ENCODE measurements at regions of chr1 and their contacts with region 1.

Region 1: DNA sequence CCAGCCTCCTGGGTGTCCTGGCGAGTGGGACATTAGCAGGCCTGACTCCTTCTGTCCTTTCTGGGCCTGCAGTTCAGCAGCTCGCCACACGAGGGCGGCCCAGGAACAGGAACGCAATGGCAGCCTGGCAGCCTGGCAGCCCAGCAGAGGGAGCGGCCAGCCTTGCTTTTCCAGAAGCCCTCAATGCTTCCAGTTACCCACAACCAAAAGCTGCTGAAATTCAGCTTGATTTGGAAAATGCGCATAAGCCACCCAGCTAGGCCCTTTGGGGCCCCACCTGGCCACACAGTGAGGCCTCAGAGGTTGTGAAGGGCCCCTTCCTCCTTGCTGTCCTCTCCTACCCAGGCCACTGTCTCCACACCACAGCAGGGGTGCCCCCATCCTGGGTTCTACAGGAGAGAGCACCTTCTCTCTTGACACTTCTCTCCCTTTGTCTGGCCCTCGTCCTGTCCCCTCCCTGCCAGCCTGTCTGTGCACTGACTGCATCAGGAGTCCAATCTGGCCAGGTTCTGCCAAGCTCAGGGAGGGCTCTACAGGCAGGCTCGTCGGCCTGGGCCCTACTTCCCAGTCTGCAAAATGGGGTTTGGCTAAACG is 103.4 kb upstream of the VAMP3 start:
- DNase-seq: peak; percentile 66 to 84 (median 78)
- H3K4me3 ChIP-seq: no peak overlapping the region
- H3K4me3 Mint-ChIP-seq: peak overlapping the region in 1 of 7 donors; percentile 74
- H3K27ac ChIP-seq: no peak overlapping the region
- H3K27ac Mint-ChIP-seq: peak overlapping the region in 1 of 8 donors; percentile 61
- H3K4me1 ChIP-seq: no peaks in the 10 kb centered on the region
- H3K4me1 Mint-ChIP-seq: peaks cover 0 to 16% (median 8%) of the 10 kb centered on the region in 3 donors
- H3K27me3 ChIP-seq: no peaks in the 10 kb centered on the region
- H3K27me3 Mint-ChIP-seq: peaks cover 0 to 5% of the 10 kb centered on the region in 2 donors

Region 2: DNA sequence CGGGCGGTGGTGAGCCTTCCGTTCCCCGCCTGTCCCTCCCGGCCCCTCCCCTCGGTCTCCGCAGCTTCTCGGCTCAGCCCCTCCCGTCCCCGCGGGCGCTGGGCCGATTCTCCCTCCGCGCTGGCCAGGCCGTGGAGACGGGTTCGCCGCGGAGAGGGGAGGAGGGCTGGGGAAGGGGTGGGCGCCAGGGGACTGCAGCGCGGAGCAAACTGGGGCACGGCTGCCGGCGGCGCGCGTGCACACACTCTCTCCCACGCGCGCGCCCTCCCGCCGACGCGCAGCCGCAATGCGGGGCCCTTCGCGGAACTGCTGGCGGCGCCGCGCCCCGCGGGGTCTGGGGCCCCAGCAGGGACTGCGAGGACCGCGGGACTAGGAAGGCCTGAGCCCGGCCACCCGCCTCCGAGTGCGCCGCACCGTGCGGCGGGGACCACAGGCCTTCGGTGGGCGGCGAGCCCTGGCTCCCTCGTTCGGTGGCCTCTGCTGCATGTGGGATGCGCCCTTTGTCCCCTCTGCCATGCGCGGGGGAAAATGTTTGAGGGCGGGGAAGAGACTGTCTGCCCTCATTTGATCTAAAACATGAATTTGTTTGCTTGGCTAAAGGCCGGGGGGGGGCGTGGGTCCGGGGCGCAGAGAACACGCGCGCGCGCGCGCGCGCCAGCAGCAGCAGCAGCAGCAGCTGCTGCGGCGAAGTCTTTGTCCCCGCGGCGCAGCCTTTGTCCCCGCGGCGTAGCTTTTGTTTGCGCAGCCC is 12.7 kb after region 1 on chr1:
- CTCF ChIA-PET with region 1: interaction called, 52 read pairs
- POLR2A ChIA-PET with region 1: no interaction called
- DNase-seq: peak in 3 of 5 donors; percentile 37 to 51 (median 37)
- H3K4me3 ChIP-seq: peak overlapping the region; percentile 61
- H3K4me3 Mint-ChIP-seq: peak overlapping the region; percentile 76 to 92 (median 79)
- H3K27ac ChIP-seq: no peak overlapping the region
- H3K27ac Mint-ChIP-seq: peak overlapping the region in 3 of 8 donors; percentile 37 to 87 (median 66)
- H3K4me1 ChIP-seq: no peaks in the 10 kb centered on the region
- H3K4me1 Mint-ChIP-seq: no peaks in the 10 kb centered on the region
- H3K27me3 ChIP-seq: peaks cover 5% of the 10 kb centered on the region
- H3K27me3 Mint-ChIP-seq: peaks cover under 1 to 6% of the 10 kb centered on the region in 2 donors

Region 3: DNA sequence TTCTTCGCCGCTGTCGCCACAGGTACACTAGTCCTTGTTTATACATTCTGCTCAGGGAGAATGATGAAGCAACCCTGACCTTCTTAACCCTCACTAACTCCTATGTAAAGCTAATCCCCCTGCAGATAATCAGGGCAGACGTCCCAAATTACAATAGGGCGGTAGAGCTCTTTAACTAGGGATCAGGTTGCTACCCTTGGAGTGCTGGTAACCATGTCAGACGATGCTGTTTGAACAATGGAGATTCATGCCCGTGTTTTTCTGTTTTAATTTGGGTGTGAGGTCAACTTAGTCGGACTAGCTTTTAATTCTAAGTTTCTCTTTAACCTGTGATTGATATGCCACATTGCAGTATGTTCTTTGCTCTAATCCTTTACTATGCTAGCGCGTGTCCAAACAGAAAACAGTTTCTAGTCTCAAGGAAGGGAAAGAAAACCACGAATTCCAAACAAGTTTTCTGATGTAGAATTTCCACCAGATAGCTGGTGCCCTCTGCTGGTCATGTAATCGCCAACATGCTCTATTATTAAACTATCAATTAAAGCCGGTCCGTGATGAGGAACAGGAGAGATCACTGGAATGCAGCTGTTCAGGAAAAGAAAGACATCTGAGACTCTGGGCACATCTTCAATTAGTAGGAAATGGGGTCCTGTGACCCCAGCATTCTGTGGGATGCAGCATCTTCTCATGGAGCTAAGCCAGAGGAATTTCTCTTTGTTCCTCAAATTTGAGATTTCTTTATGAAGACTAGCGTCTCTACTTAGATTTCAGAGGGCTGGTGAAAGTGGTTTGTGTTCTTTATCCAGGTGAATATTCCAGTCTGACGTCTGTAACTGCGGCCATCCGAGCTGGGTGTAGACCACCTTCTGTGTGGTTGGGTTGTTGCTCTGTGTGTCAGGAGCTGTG is 85.0 kb after region 1 on chr1:
- CTCF ChIA-PET with region 1: interaction called, 214 read pairs
- POLR2A ChIA-PET with region 1: interaction called, 3 read pairs
- DNase-seq: peak; percentile 11 to 64 (median 37)
- H3K4me3 ChIP-seq: no peak overlapping the region
- H3K4me3 Mint-ChIP-seq: peak overlapping the region in 6 of 7 donors; percentile 33 to 71 (median 49)
- H3K27ac ChIP-seq: no peak overlapping the region
- H3K27ac Mint-ChIP-seq: peak overlapping the region in 2 of 8 donors; percentile 16 to 54
- H3K4me1 ChIP-seq: peaks cover 4% of the 10 kb centered on the region
- H3K4me1 Mint-ChIP-seq: peaks cover 27 to 43% (median 39%) of the 10 kb centered on the region in 3 donors
- H3K27me3 ChIP-seq: no peaks in the 10 kb centered on the region
- H3K27me3 Mint-ChIP-seq: peaks cover 4 to 5% of the 10 kb centered on the region in 2 donors

Region 4: DNA sequence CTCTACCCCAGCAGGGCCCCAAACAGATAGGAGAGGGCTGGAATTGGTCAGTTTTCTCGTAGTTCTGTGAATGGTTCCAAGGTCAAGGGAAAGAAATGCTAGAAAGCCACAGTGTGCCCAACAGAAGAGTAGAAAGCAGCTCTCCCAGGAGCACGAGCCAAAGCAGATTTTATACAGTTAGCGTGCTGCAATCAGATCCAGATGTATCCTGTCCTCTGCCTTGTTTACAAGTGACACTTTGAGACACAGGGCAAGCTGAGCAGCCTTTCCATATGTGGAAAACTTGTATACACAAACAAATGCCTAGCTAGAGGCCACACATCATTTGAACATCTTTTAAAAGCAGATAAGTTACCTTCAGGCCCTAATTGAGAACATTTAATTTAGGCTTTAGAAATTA is 109.9 kb after region 1 on chr1:
- CTCF ChIA-PET with region 1: no interaction called
- POLR2A ChIA-PET with region 1: no interaction called
- DNase-seq: no peak
- H3K4me3 ChIP-seq: no peak overlapping the region
- H3K4me3 Mint-ChIP-seq: peak overlapping the region in 1 of 7 donors; percentile 18
- H3K27ac ChIP-seq: no peak overlapping the region
- H3K27ac Mint-ChIP-seq: no peak overlapping the region
- H3K4me1 ChIP-seq: peaks cover 14% of the 10 kb centered on the region
- H3K4me1 Mint-ChIP-seq: peaks cover 31 to 58% (median 51%) of the 10 kb centered on the region in 3 donors
- H3K27me3 ChIP-seq: no peaks in the 10 kb centered on the region
- H3K27me3 Mint-ChIP-seq: no peaks in the 10 kb centered on the region

Region 5: DNA sequence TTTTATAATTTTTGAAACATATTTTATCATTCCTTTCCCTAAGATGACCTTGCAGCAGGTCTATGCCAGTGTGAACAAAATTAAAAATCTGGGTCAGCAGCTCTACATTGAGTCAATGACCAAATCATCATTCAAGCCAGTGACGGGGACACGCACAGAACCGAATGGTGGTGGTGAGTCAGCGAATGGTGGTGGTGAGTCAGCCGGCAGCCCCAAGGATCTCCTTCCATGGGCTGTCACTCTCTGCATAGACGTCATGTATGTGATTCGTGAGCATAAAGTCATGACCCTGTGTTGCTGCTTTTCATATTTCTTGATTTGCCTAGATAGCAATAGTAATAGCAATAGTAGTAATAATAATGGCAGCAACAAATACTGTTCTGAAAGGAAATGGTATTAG is 142.7 kb after region 1 on chr1:
- CTCF ChIA-PET with region 1: no interaction called
- POLR2A ChIA-PET with region 1: no interaction called
- DNase-seq: no peak
- H3K4me3 ChIP-seq: no peak overlapping the region
- H3K4me3 Mint-ChIP-seq: no peak overlapping the region
- H3K27ac ChIP-seq: no peak overlapping the region
- H3K27ac Mint-ChIP-seq: no peak overlapping the region
- H3K4me1 ChIP-seq: no peaks in the 10 kb centered on the region
- H3K4me1 Mint-ChIP-seq: no peaks in the 10 kb centered on the region
- H3K27me3 ChIP-seq: no peaks in the 10 kb centered on the region
- H3K27me3 Mint-ChIP-seq: no peaks in the 10 kb centered on the region

Region 6: DNA sequence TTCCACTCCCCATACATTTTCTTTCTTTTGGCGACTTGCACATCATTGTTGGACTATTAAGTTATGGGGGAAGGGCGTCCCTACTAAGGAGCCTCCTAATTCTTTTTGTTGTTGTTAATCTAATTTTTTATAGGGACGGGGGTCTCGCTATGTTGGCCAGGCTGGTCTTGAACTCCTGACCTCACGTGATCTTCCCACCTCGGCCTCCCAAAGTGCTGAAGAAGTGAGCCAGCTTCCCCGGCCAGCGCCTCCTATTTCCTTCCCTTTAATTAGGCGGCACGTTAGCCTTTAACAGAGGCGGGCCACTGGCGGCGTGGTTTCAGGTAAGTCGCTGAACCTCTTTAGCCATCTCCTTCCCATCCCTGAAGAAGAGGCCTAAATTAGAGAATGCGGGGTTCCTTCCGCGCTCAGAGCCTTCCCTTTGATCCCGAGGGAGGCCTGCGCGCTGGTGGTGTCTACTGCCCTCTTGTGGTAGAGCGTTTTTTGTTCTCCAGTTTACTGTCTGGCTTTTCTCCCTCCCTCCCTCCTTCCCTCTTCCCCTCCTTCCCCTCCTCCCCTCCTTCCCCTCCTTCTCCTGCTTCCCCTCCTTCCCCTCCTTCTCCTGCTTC is 234.9 kb after region 1 on chr1:
- CTCF ChIA-PET with region 1: interaction called, 15 read pairs
- POLR2A ChIA-PET with region 1: no interaction called
- DNase-seq: peak; percentile 24 to 66 (median 51)
- H3K4me3 ChIP-seq: peak overlapping the region; percentile 55
- H3K4me3 Mint-ChIP-seq: peak overlapping the region in 6 of 7 donors; percentile 72 to 87 (median 76)
- H3K27ac ChIP-seq: no peak overlapping the region
- H3K27ac Mint-ChIP-seq: peak overlapping the region in 5 of 8 donors; percentile 12 to 85 (median 47)
- H3K4me1 ChIP-seq: no peaks in the 10 kb centered on the region
- H3K4me1 Mint-ChIP-seq: peaks cover 13 to 22% (median 16%) of the 10 kb centered on the region in 3 donors
- H3K27me3 ChIP-seq: no peaks in the 10 kb centered on the region
- H3K27me3 Mint-ChIP-seq: peaks cover 0 to 3% of the 10 kb centered on the region in 2 donors